CD8-positive, alpha-beta memory T cell (primary cell): ENCODE measurements at regions of chr1 and their contacts with region 1.

Region 1: GRCh38 chr1:154546264-154547063 is 12.0 kb downstream of the UBE2Q1 start:
- DNase-seq: peak; percentile 18 to 66 (median 44)
- H3K4me3 ChIP-seq: no peak overlapping the region
- H3K4me3 Mint-ChIP-seq: no peak overlapping the region
- H3K27ac ChIP-seq: no peak overlapping the region
- H3K27ac Mint-ChIP-seq: peak overlapping the region in 1 of 8 donors; percentile 6
- H3K4me1 ChIP-seq: no peaks in the 10 kb centered on the region
- H3K4me1 Mint-ChIP-seq: peaks cover 10 to 31% (median 19%) of the 10 kb centered on the region in 3 donors
- H3K27me3 ChIP-seq: no peaks in the 10 kb centered on the region
- H3K27me3 Mint-ChIP-seq: peaks cover 2 to 4% of the 10 kb centered on the region in 2 donors

Region 2: GRCh38 chr1:154479764-154480421 is 66.6 kb before region 1 on chr1:
- CTCF ChIA-PET with region 1: interaction called, 23 read pairs
- POLR2A ChIA-PET with region 1: no interaction called
- DNase-seq: peak in 4 of 5 donors; percentile 45 to 66 (median 60)
- H3K4me3 ChIP-seq: no peak overlapping the region
- H3K4me3 Mint-ChIP-seq: no peak overlapping the region
- H3K27ac ChIP-seq: no peak overlapping the region
- H3K27ac Mint-ChIP-seq: no peak overlapping the region
- H3K4me1 ChIP-seq: peaks cover 8% of the 10 kb centered on the region
- H3K4me1 Mint-ChIP-seq: peaks cover 3 to 6% (median 4%) of the 10 kb centered on the region in 3 donors
- H3K27me3 ChIP-seq: no peaks in the 10 kb centered on the region
- H3K27me3 Mint-ChIP-seq: peaks cover under 1 to 3% of the 10 kb centered on the region in 2 donors